Naive thymus-derived CD4-positive, alpha-beta T cell (primary cell): ENCODE measurements at regions of chr12 and their contacts with region 1.

Region 1: GRCh38 chr12:53321074-53321814 is at the start of gene AAAS:
- DNase-seq: peak; percentile 89 to 95 (median 94)
- ATAC-seq: peak; percentile 89
- H3K4me3 ChIP-seq: peak within 1 kb of the TSS; percentile 98
- H3K4me3 Mint-ChIP-seq: peak within 1 kb of the TSS; percentile 94 to 99 (median 96)
- H3K27ac ChIP-seq: peak within 1 kb of the TSS; percentile 73
- H3K27ac Mint-ChIP-seq: peak within 1 kb of the TSS; percentile 94 to 98 (median 94)
- H3K4me1 ChIP-seq: peaks cover 25 to 37% of the 10 kb centered on the region in 2 donors
- H3K4me1 Mint-ChIP-seq: peaks cover 23 to 47% (median 43%) of the 10 kb centered on the region in 7 donors
- H3K27me3 ChIP-seq: no peaks in the 10 kb centered on the region
- H3K27me3 Mint-ChIP-seq: peaks cover 0 to 3% (median 0%) of the 10 kb centered on the region in 5 donors
- total RNA-seq, gene AAAS: 35.4 to 73.5 (median 69.0) TPM

Region 2: GRCh38 chr12:53159195-53159839 is 161.9 kb before region 1 on chr12:
- CTCF ChIA-PET with region 1: interaction called, 14 read pairs
- POLR2A ChIA-PET with region 1: no interaction called
- intact Hi-C with region 1: no loop called
- DNase-seq: peak; percentile 72 to 91 (median 85)
- ATAC-seq: peak; percentile 100
- H3K4me3 ChIP-seq: no peak overlapping the region
- H3K4me3 Mint-ChIP-seq: peak overlapping the region in 1 of 10 donors; percentile 24
- H3K27ac ChIP-seq: no peak overlapping the region
- H3K27ac Mint-ChIP-seq: peak overlapping the region in 6 of 9 donors; percentile 26 to 66 (median 52)
- H3K4me1 ChIP-seq: peaks cover 5 to 7% of the 10 kb centered on the region in 2 donors
- H3K4me1 Mint-ChIP-seq: peaks cover 4 to 12% (median 7%) of the 10 kb centered on the region in 7 donors
- H3K27me3 ChIP-seq: no peaks in the 10 kb centered on the region
- H3K27me3 Mint-ChIP-seq: no peaks in the 10 kb centered on the region

Region 3: GRCh38 chr12:53220801-53221202 is 100.4 kb before region 1 on chr12:
- CTCF ChIA-PET with region 1: no interaction called
- POLR2A ChIA-PET with region 1: interaction called, 5 read pairs
- intact Hi-C with region 1: loop called (anchors 1 to 2 kb)
- DNase-seq: peak in 8 of 9 donors; percentile 51 to 85 (median 55)
- ATAC-seq: peak; percentile 79
- H3K4me3 ChIP-seq: peak overlapping the region; percentile 95
- H3K4me3 Mint-ChIP-seq: peak overlapping the region; percentile 94 to 100 (median 98)
- H3K27ac ChIP-seq: peak overlapping the region; percentile 78
- H3K27ac Mint-ChIP-seq: peak overlapping the region; percentile 84 to 98 (median 94)
- H3K4me1 ChIP-seq: peaks cover 55 to 63% of the 10 kb centered on the region in 2 donors
- H3K4me1 Mint-ChIP-seq: peaks cover 50 to 80% (median 77%) of the 10 kb centered on the region in 7 donors
- H3K27me3 ChIP-seq: no peaks in the 10 kb centered on the region
- H3K27me3 Mint-ChIP-seq: no peaks in the 10 kb centered on the region

Region 4: GRCh38 chr12:53344824-53345485 is 23.7 kb after region 1 on chr12:
- CTCF ChIA-PET with region 1: interaction called, 90 read pairs
- POLR2A ChIA-PET with region 1: interaction called, 52 read pairs
- intact Hi-C with region 1: loop called (anchors 1 kb)
- DNase-seq: peak; percentile 42 to 68 (median 63)
- ATAC-seq: peak; percentile 89
- H3K4me3 ChIP-seq: peak overlapping the region; percentile 79
- H3K4me3 Mint-ChIP-seq: peak overlapping the region; percentile 91 to 100 (median 97)
- H3K27ac ChIP-seq: peak overlapping the region; percentile 66
- H3K27ac Mint-ChIP-seq: peak overlapping the region; percentile 87 to 96 (median 91)
- H3K4me1 ChIP-seq: peaks cover 0 to 10% of the 10 kb centered on the region in 2 donors
- H3K4me1 Mint-ChIP-seq: peaks cover 11 to 25% (median 17%) of the 10 kb centered on the region in 7 donors
- H3K27me3 ChIP-seq: no peaks in the 10 kb centered on the region
- H3K27me3 Mint-ChIP-seq: peaks cover 0 to 13% (median 0%) of the 10 kb centered on the region in 5 donors

Region 5: DNA sequence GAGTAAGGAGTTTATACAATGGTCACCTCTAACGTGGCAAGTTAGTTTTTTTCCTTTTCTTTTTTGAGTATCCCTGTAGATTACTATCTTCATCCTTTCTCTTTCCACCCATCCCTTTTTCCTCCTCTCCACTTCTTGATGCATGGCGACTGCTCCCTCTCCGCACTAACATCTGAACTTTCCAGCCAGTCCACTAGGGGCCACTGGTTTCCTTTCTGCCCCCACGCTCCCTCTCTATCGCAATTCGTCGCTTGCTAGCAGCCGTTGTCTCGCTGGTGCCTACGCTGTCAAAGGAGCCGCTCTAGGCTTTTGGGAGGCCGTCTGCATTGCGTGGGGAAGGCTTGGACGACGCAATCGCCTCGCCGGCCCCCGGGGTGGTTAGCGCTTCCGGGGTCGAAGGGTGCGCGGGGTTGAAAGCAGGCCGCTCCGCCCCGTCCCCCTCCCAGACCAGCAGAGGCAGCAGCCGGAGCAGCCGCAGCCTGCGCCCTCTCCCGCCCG is 130.5 kb after region 1 on chr12 and contains the start of gene PCBP2:
- CTCF ChIA-PET with region 1: no interaction called
- POLR2A ChIA-PET with region 1: interaction called, 4 read pairs
- intact Hi-C with region 1: loop called (anchors 1 kb)
- DNase-seq: peak; percentile 88 to 98 (median 97)
- ATAC-seq: peak; percentile 94
- H3K4me3 ChIP-seq: peak within 1 kb of the TSS; percentile 69
- H3K4me3 Mint-ChIP-seq: peak within 1 kb of the TSS; percentile 51 to 99 (median 98)
- H3K27ac ChIP-seq: peak within 1 kb of the TSS; percentile 96
- H3K27ac Mint-ChIP-seq: peak within 1 kb of the TSS; percentile 85 to 100 (median 99)
- H3K4me1 ChIP-seq: peaks cover 20 to 26% of the 10 kb centered on the region in 2 donors
- H3K4me1 Mint-ChIP-seq: peaks cover 23 to 42% (median 37%) of the 10 kb centered on the region in 7 donors
- H3K27me3 ChIP-seq: no peaks in the 10 kb centered on the region
- H3K27me3 Mint-ChIP-seq: no peaks in the 10 kb centered on the region
- total RNA-seq, gene PCBP2: 737 to 1,110 (median 928) TPM

Region 6: DNA sequence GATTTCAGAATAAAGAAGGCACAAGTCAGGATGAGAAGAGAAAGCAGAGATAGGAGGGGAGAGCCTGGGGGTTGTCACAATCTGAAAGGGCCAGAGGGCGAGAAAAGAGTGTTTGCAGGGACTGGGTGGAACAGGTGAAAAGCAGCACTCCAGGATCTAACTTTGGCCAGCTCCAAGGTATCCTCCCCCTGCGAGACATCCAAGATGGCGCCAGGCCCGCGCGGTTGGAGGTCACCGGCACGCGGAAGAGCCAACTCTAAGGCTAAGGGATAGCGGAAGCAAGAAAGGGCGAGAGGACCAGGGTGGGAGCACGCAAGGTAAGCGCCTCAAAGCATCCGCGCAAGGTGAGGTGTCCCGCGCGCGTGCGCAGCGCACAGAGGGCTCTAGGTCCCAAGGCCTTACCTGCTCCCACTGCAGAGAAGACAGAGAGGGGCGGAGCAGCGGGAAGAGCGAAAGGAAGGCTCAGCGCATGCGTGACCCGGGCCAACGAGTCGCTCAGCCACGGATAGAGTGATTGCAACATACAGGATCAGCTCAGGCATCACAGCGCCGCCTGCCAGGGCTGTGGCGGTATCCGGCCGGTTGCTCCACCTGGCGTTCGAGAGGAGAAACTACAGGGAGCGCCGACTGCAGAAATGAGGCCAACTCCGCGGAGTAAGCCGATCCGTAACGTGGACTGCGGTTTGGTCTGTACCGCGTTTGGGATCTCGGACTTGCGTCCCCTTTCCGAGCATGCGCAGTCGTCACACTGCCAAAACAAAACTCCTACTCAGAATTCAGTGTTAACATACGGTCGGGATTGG is 354.6 kb after region 1 on chr12 and contains the start of gene ATP5MC2:
- CTCF ChIA-PET with region 1: no interaction called
- POLR2A ChIA-PET with region 1: interaction called, 4 read pairs
- intact Hi-C with region 1: loop called in 1 of 2 experiments (anchors 1 kb)
- DNase-seq: peak; percentile 92 to 98 (median 97)
- ATAC-seq: peak; percentile 97
- H3K4me3 ChIP-seq: peak within 1 kb of the TSS; percentile 64
- H3K4me3 Mint-ChIP-seq: peak within 1 kb of the TSS; percentile 91 to 99 (median 94)
- H3K27ac ChIP-seq: peak within 1 kb of the TSS; percentile 76
- H3K27ac Mint-ChIP-seq: peak within 1 kb of the TSS; percentile 91 to 98 (median 95)
- H3K4me1 ChIP-seq: peaks cover 7 to 21% of the 10 kb centered on the region in 2 donors
- H3K4me1 Mint-ChIP-seq: peaks cover 21 to 38% (median 32%) of the 10 kb centered on the region in 7 donors
- H3K27me3 ChIP-seq: no peaks in the 10 kb centered on the region
- H3K27me3 Mint-ChIP-seq: peaks cover 16 to 35% (median 21%) of the 10 kb centered on the region in 5 donors
- total RNA-seq, gene ATP5MC2: 237 to 332 (median 275) TPM

Region 7: GRCh38 chr12:54502485-54502884 is 1181.2 kb after region 1 on chr12:
- CTCF ChIA-PET with region 1: no interaction called
- POLR2A ChIA-PET with region 1: no interaction called
- intact Hi-C with region 1: no loop called
- DNase-seq: no peak
- ATAC-seq: no peak
- H3K4me3 ChIP-seq: no peak overlapping the region
- H3K4me3 Mint-ChIP-seq: peak overlapping the region; percentile 41 to 97 (median 68)
- H3K27ac ChIP-seq: no peak overlapping the region
- H3K27ac Mint-ChIP-seq: peak overlapping the region in 7 of 9 donors; percentile 4 to 88 (median 67)
- H3K4me1 ChIP-seq: peaks cover 19 to 28% of the 10 kb centered on the region in 2 donors
- H3K4me1 Mint-ChIP-seq: peaks cover 46 to 76% (median 57%) of the 10 kb centered on the region in 7 donors
- H3K27me3 ChIP-seq: no peaks in the 10 kb centered on the region
- H3K27me3 Mint-ChIP-seq: no peaks in the 10 kb centered on the region